ENCODE measurements at regions of chr9 and their contacts with region 1.

Region 1: DNA sequence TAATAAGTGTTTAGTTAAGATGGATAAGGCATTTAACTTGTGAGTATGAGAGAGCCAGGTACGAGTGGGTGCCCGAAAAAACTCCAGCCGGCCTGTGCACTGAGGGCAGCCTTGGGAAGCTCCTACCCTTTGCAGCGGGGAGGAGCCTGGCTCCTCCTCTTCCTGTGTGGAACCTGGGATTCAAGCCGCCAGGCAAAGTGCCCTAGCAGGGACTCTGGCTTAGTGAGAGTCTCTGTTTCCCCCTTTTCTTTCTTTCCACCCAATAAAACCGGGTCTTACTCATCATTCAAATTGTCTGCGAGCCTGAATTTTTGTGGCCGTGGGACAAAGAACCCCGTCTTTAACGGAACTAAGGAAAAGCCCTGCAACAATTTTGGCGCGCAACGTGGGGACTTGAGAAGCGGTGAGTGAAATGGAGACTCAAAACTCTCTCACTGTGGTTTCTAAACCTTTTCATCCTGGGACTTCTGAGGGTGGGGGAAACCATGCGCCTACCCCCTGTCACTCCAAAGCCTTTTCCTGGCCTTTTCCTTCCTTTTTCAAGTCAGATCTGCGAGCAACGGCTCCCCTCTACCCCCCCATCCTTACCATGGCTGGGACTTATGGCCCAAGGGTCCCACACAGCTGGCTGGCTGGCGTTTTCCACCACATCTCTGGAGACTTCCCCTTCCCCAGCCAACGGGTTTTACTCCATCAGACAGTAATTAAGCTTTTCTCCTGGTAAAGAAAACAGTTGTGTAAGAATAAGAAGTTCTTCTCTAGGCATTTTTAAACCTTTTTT is 535.7 kb upstream of the ACO1 start:
- DNase-seq: peak; percentile 72
- ATAC-seq: peak; percentile 100
- H3K4me3 ChIP-seq: peak overlapping the region; percentile 72 to 83 (median 78)
- H3K27ac ChIP-seq: peak overlapping the region; percentile 77
- H3K4me1 ChIP-seq: peaks cover 20% of the 10 kb centered on the region
- H3K27me3 ChIP-seq: no peaks in the 10 kb centered on the region; a peak in 1 of 5 replicates
- CTCF ChIP-seq: no peak
- EP300 ChIP-seq: no peak
- POLR2A ChIP-seq: peak; percentile 83 to 90
- RAD21 ChIP-seq: no peak

Region 2: DNA sequence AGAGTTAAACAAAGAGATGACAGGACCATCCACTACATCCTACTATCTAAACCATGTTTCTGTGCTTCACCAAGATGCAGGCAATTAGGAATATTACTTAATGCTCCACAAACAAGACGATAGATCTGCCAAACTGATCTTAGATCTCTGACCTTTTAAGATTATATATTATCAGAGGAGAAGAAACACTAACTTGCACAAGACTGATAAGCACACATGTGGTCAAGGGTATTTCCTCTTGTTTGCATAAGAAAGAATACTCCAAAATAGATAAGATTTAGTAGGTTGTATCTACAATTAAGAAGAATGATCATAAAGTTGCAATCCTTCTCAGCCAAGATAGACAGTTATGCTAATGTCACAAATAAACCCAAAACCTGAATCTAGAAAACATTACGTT is 65.2 kb before region 1 on chr9:
- CTCF ChIA-PET with region 1: no interaction called
- POLR2A ChIA-PET with region 1: no interaction called
- in situ Hi-C with region 1: no loop called
- intact Hi-C with region 1: no loop called
- DNase-seq: no peak
- ATAC-seq: no peak
- H3K4me3 ChIP-seq: no peak overlapping the region
- H3K27ac ChIP-seq: no peak overlapping the region
- H3K4me1 ChIP-seq: no peaks in the 10 kb centered on the region
- H3K27me3 ChIP-seq: no peaks in the 10 kb centered on the region
- CTCF ChIP-seq: no peak
- EP300 ChIP-seq: no peak
- POLR2A ChIP-seq: no peak
- RAD21 ChIP-seq: no peak

Region 3: GRCh38 chr9:32004431-32005076 is 155.9 kb after region 1 on chr9:
- CTCF ChIA-PET with region 1: no interaction called
- POLR2A ChIA-PET with region 1: no interaction called
- in situ Hi-C with region 1: no loop called
- intact Hi-C with region 1: loop called (anchors 10 kb)
- DNase-seq: peak; percentile 89
- ATAC-seq: peak; percentile 99
- H3K4me3 ChIP-seq: peak overlapping the region; percentile 41 to 49 (median 41); a peak in 5 of 6 replicates
- H3K27ac ChIP-seq: peak overlapping the region; percentile 88
- H3K4me1 ChIP-seq: peaks cover 23% of the 10 kb centered on the region
- H3K27me3 ChIP-seq: no peaks in the 10 kb centered on the region
- CTCF ChIP-seq: no peak
- EP300 ChIP-seq: peak in 1 of 2 experiments; percentile 49; a peak in 1 of 4 replicates
- POLR2A ChIP-seq: peak in 1 of 2 experiments; percentile 25; a peak in 1 of 4 replicates
- RAD21 ChIP-seq: no peak